H1 (cell line): ENCODE measurements at regions of chr3 and their contacts with region 1.

Region 1: GRCh38 chr3:13141991-13142412 is 68.8 kb upstream of the IQSEC1 start:
- DNase-seq: peak; percentile 38 to 83
- H3K4me3 ChIP-seq: no peak overlapping the region
- H3K27ac ChIP-seq: no peak overlapping the region
- H3K4me1 ChIP-seq: no peaks in the 10 kb centered on the region; a peak in 1 of 7 replicates
- H3K27me3 ChIP-seq: no peaks in the 10 kb centered on the region
- CTCF ChIP-seq: no peak
- EP300 ChIP-seq: no peak
- POLR2A ChIP-seq: no peak
- RAD21 ChIP-seq: no peak

Region 2: GRCh38 chr3:13073326-13074005 is 68.5 kb before region 1 on chr3 and contains the start of gene IQSEC1:
- CTCF ChIA-PET with region 1: no interaction called
- POLR2A ChIA-PET with region 1: no interaction called
- DNase-seq: peak in 1 of 2 experiments; percentile 87
- H3K4me3 ChIP-seq: peak within 1 kb of the TSS; percentile 12 to 54 (median 23)
- H3K27ac ChIP-seq: no peak within 1 kb of the TSS
- H3K4me1 ChIP-seq: peaks cover 0 to 13% (median 4%) of the 10 kb centered on the region in 4 experiments; a peak in 5 of 7 replicates
- H3K27me3 ChIP-seq: peaks cover 6 to 38% (median 26%) of the 10 kb centered on the region in 4 experiments
- CTCF ChIP-seq: no peak
- EP300 ChIP-seq: no peak
- POLR2A ChIP-seq: no peak
- RAD21 ChIP-seq: no peak
- total RNA-seq, gene IQSEC1: 28.2 and 28.8 TPM in 2 replicates

Region 3: GRCh38 chr3:13110678-13111116 is 31.3 kb before region 1 on chr3:
- CTCF ChIA-PET with region 1: interaction called, 13 read pairs
- POLR2A ChIA-PET with region 1: no interaction called
- DNase-seq: no peak
- H3K4me3 ChIP-seq: no peak overlapping the region
- H3K27ac ChIP-seq: no peak overlapping the region
- H3K4me1 ChIP-seq: peaks cover 0 to 5% (median 0%) of the 10 kb centered on the region in 4 experiments; a peak in 1 of 7 replicates
- H3K27me3 ChIP-seq: no peaks in the 10 kb centered on the region
- CTCF ChIP-seq: no peak
- EP300 ChIP-seq: no peak
- POLR2A ChIP-seq: no peak
- RAD21 ChIP-seq: no peak

Region 4: GRCh38 chr3:13119471-13120220 is 22.4 kb before region 1 on chr3:
- CTCF ChIA-PET with region 1: interaction called, 13 read pairs
- POLR2A ChIA-PET with region 1: no interaction called
- DNase-seq: no peak
- H3K4me3 ChIP-seq: no peak overlapping the region
- H3K27ac ChIP-seq: no peak overlapping the region
- H3K4me1 ChIP-seq: no peaks in the 10 kb centered on the region; a peak in 1 of 7 replicates
- H3K27me3 ChIP-seq: no peaks in the 10 kb centered on the region
- CTCF ChIP-seq: no peak
- EP300 ChIP-seq: no peak
- POLR2A ChIP-seq: no peak
- RAD21 ChIP-seq: no peak

Region 5: DNA sequence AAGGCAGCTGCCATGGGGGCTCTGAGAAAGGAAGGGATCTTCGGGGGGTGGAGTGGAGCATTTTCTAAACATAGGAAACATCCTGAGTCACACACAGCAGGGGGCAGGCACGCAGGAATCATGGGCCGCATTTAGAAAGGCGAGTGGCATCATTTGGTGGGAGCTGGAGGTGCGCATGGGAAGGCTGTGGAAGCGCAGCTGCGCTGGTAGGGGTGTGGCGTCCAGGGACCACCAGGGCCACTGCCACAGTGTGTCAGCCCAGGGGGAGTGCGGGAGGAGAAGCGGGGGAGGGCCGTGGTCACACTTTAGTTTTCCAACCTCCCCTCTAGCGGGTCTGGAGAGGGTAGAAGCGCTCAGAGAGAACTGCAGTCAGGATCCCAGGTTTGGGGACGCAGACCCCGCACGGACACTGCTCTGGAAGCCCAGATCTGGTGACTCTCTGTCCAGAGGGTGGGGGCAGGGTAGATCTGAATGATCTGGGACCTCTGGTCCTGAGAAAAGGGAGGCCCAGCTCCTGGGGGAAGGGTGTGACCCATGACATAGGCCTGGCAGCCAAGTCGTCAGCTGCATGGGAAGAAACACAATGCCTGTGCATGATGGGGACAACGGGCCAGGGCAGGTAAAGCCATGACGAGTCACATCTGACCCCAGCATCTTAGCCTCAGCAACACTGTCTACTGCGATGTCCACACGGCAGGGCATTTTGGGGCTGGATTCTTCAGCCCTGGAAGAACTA is 19.2 kb after region 1 on chr3:
- CTCF ChIA-PET with region 1: interaction called, 24 read pairs
- POLR2A ChIA-PET with region 1: interaction called, 3 read pairs
- DNase-seq: peak in 1 of 2 experiments; percentile 56
- H3K4me3 ChIP-seq: no peak overlapping the region
- H3K27ac ChIP-seq: no peak overlapping the region
- H3K4me1 ChIP-seq: peaks cover 4 to 26% (median 18%) of the 10 kb centered on the region in 4 experiments
- H3K27me3 ChIP-seq: no peaks in the 10 kb centered on the region
- CTCF ChIP-seq: no peak
- EP300 ChIP-seq: no peak
- POLR2A ChIP-seq: no peak
- RAD21 ChIP-seq: 0 out of 4 replicates have a peak, but pooled peaks of 1 of the 2 experiments have one; percentile 6

Region 6: GRCh38 chr3:13192471-13193213 is 50.6 kb after region 1 on chr3:
- CTCF ChIA-PET with region 1: interaction called, 11 read pairs
- POLR2A ChIA-PET with region 1: no interaction called
- DNase-seq: no peak
- H3K4me3 ChIP-seq: no peak overlapping the region
- H3K27ac ChIP-seq: no peak overlapping the region
- H3K4me1 ChIP-seq: peaks cover 0 to 7% (median 2%) of the 10 kb centered on the region in 4 experiments; a peak in 4 of 7 replicates
- H3K27me3 ChIP-seq: no peaks in the 10 kb centered on the region
- CTCF ChIP-seq: peak in 2 of 3 experiments; percentile 56 to 84; a peak in 3 of 4 replicates
- EP300 ChIP-seq: no peak
- POLR2A ChIP-seq: no peak
- RAD21 ChIP-seq: peak in 1 of 2 experiments; percentile 44; a peak in 2 of 4 replicates

Region 7: DNA sequence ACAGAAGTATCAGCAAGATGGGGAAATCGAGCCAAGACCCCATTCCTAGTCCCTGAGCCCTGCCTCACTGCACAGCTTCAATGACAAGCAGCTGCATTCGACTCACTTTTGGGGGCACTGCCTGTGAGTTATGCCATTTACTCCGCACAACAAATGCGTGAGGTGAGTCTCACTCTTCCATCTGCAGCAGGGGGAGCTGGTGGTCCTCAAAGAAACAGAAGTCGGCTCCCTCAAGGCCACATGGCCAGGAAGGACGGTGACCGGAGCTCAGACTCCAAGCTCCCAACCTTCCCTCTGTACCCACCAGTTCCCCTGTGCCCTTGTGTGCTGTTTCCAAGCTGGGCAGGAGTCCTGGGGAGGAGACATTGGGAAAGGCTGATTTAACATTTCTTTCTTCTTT is 58.9 kb after region 1 on chr3:
- CTCF ChIA-PET with region 1: interaction called, 10 read pairs
- POLR2A ChIA-PET with region 1: no interaction called
- DNase-seq: peak in 1 of 2 experiments; percentile 19
- H3K4me3 ChIP-seq: no peak overlapping the region
- H3K27ac ChIP-seq: no peak overlapping the region
- H3K4me1 ChIP-seq: peaks cover 0 to 3% (median under 1%) of the 10 kb centered on the region in 4 experiments; a peak in 5 of 7 replicates
- H3K27me3 ChIP-seq: peaks cover 0 to 4% (median 3%) of the 10 kb centered on the region in 4 experiments; a peak in 4 of 7 replicates
- CTCF ChIP-seq: peak in 2 of 3 experiments; percentile 71 to 72; a peak in 3 of 4 replicates
- EP300 ChIP-seq: no peak
- POLR2A ChIP-seq: no peak
- RAD21 ChIP-seq: peak; percentile 81 to 85

Region 8: DNA sequence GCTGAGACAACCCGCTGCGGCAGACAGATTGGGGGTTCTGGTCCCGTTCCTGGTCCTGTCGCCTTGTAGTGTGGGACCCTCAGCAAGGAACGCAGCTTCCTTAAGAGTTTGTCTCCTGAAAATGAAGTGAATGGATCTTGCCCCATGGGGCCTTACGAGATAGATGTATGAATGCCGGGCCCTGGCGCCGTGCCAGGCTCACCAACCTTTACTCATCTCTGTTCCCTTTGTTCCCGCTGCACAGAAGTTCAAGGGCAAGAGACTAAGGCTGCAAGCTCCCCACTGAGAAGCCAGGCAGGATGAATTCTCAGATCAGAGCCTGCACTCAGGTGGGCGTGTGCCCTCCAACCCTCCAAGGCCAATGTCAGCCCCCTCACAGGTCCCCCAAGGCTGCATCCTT is 93.9 kb after region 1 on chr3:
- CTCF ChIA-PET with region 1: no interaction called
- POLR2A ChIA-PET with region 1: no interaction called
- DNase-seq: no peak
- H3K4me3 ChIP-seq: no peak overlapping the region
- H3K27ac ChIP-seq: no peak overlapping the region
- H3K4me1 ChIP-seq: peaks cover 0 to 11% (median 7%) of the 10 kb centered on the region in 4 experiments; a peak in 5 of 7 replicates
- H3K27me3 ChIP-seq: no peaks in the 10 kb centered on the region
- CTCF ChIP-seq: no peak
- EP300 ChIP-seq: no peak
- POLR2A ChIP-seq: no peak
- RAD21 ChIP-seq: no peak